Activated CD4-positive, alpha-beta T cell treated with anti-CD3 and anti-CD28 coated beads for 36 hours (primary cell): ENCODE measurements at regions of chr9 and their contacts with region 1.

Region 1: DNA sequence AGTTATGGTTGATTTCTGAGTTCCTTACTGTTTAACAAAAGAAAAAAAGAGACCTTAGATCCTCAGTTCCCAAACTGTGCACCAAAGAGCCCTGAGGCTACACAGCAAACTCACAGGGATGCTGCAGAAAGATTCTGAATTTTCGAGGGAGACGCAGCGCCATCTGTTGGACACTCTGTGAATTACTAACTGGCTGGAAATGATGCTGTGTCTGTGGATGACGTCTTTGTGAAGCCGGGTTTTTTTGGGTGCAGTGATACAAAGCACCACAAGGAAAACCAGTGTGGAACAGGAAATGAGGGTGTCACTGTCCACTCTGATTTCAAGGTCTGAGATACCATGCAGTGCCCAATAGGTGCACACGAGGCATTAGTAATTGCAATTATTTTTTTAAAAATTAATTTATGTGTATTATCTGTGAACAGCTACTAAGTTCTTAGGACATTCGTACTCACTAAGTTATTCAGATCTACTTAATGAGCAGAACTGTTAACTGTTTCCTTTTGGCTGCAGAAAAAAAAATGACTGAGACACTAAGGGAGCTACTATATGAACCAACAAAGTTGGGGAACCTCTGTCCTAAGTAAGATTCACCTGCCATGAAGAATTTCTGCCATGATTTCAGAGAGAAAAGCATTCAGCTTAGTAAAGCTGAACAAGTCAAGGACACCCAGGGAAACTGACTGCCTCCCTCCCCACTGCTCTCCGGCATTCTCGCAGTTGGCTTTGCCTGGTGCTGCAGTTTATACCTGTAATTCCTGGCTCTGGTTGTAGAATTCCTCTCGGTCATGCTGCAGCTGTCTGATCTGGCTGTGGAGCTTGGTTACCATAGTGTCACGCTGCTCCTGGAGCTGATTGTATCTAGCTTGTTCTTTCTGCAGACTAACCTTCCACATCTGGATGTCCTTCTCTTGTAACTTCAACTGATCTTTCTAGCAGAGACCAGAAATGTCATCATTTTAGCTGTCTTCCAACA is 23.4 kb downstream of the SPACA9 start:
- DNase-seq: peak; percentile 87
- ATAC-seq: peak; percentile 99
- H3K4me3 Mint-ChIP-seq: no peak overlapping the region
- H3K27ac Mint-ChIP-seq: no peak overlapping the region
- H3K4me1 Mint-ChIP-seq: peaks cover 8% of the 10 kb centered on the region
- H3K27me3 Mint-ChIP-seq: no peaks in the 10 kb centered on the region

Region 2: DNA sequence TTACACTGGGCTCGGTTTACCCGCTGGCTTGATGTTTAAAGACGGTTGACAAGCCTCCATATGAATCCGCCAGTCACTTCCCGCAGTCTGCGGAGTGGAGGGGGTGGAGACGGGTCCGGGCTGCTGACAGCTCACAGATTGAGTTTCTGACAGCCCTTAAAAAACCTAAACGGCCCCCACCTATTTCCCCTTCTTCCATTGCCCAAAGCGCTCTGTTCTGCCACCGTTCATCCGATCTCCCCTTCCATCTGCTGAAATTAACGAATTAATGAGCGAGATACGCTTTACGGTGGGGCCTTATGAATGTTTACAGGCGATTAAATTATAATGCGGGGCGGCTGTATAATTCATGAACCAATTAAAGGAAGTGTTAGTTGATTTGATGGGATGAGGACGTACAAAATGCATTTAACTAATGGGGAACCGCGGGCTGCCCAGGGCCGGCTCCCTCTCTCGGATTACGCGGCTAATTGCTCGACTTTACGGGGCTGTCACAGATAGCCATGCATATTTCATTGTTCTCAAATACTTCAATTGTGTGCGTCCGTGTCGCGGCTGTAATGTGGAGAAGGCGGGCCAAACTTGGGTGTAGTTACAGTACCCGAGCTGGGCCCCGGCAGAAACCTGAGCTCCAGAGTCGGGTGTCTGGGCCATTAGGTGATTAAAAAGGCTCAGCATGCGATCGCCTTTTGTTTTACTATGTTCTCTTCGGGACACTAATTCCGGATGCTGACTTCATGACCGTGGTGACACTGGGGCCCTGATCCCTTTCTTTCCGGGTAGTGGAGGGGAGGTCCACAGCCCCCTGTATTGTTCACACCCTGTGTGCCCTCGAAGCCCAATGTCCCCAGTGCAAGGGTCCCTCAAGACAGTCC is 157.0 kb before region 1 on chr9:
- CTCF ChIA-PET with region 1: no interaction called
- POLR2A ChIA-PET with region 1: no interaction called
- intact Hi-C with region 1: no loop called
- DNase-seq: peak; percentile 29
- ATAC-seq: no peak
- H3K4me3 Mint-ChIP-seq: no peak overlapping the region
- H3K27ac Mint-ChIP-seq: no peak overlapping the region
- H3K4me1 Mint-ChIP-seq: peaks cover 5% of the 10 kb centered on the region
- H3K27me3 Mint-ChIP-seq: peaks cover 44% of the 10 kb centered on the region

Region 3: GRCh38 chr9:132800038-132800648 is 102.0 kb before region 1 on chr9:
- CTCF ChIA-PET with region 1: interaction called, 3 read pairs
- POLR2A ChIA-PET with region 1: no interaction called
- intact Hi-C with region 1: loop called in 1 of 2 experiments (anchors 5 kb)
- DNase-seq: peak; percentile 77
- ATAC-seq: peak; percentile 87
- H3K4me3 Mint-ChIP-seq: no peak overlapping the region
- H3K27ac Mint-ChIP-seq: no peak overlapping the region
- H3K4me1 Mint-ChIP-seq: no peaks in the 10 kb centered on the region
- H3K27me3 Mint-ChIP-seq: peaks cover 9% of the 10 kb centered on the region

Region 4: GRCh38 chr9:132849185-132849706 is 52.9 kb before region 1 on chr9:
- CTCF ChIA-PET with region 1: interaction called, 29 read pairs
- POLR2A ChIA-PET with region 1: interaction called, 4 read pairs
- intact Hi-C with region 1: loop called (anchors 1 to 2 kb)
- DNase-seq: peak; percentile 36
- ATAC-seq: peak; percentile 56
- H3K4me3 Mint-ChIP-seq: peak overlapping the region; percentile 43
- H3K27ac Mint-ChIP-seq: peak overlapping the region; percentile 72
- H3K4me1 Mint-ChIP-seq: peaks cover 17% of the 10 kb centered on the region
- H3K27me3 Mint-ChIP-seq: no peaks in the 10 kb centered on the region

Region 5: DNA sequence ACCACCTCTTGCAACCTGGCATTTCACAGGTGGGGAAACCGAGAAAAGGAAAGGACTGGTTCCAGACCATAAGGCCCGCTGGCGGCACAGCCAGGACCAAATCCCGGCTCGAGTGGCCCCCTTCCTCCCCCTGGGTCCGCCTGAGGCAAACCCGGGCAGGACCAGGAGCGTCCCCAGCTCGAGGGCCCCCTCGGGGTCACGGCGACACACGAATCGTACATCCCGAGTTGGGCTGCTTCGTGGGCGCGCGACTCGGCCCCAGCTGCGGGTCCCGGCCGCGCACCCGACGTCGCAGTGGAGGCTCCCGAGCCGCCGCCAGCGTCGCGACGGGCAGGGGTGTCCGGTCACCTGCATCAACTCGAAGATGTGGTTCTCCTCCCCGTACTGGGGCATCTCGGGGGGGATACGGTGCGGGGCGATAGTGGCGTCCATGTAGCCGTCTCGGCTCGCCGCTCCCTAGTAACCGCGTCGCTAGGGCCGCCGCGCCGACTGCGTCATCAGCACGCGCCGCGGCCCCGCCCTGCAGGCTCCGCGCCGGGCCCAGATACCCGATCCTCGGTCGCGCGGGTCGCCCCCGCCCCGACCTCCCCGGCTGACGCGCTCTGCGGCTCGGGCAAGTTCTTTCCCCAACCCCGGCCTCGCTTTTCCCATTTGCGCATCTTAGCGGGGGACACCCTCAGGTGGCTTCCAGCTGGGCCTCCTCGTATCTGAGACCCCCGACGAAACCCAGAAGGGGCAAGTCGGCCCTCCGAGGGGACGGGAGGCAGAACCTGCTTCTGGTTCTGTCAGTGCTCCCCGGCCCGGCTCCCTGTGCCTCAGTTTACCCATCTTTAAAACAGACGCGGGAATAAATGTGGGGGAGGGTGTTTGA is 24.1 kb before region 1 on chr9 and contains the start of gene AK8:
- CTCF ChIA-PET with region 1: interaction called, 12 read pairs
- POLR2A ChIA-PET with region 1: no interaction called
- intact Hi-C with region 1: loop called in 1 of 2 experiments (anchors 1 kb)
- DNase-seq: peak; percentile 86
- ATAC-seq: peak; percentile 76
- H3K4me3 Mint-ChIP-seq: peak within 1 kb of the TSS; percentile 73
- H3K27ac Mint-ChIP-seq: peak within 1 kb of the TSS; percentile 13
- H3K4me1 Mint-ChIP-seq: peaks cover 21% of the 10 kb centered on the region
- H3K27me3 Mint-ChIP-seq: no peaks in the 10 kb centered on the region
- total RNA-seq, gene AK8: 0.21 TPM in 1 of 2 experiments, not detected in the other

Region 6: DNA sequence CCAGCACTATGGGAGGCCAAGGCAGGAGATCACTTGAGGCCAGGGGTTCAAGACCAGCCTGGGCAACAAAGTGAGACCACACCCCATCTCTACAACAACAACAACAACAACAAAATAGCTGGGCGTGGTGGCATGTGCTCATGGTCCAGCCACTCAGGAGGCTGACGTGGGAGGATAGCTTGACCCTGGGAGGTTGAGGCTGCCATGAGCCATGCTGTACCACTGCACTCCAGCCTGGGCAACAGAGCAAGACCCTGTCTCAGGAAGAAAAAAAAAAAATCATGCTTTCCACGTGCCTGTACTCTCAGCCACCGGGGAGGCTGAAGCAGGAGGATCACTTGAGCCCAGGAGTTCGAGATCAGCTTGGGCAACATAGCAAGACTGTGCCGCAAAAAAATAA is 12.8 kb after region 1 on chr9:
- CTCF ChIA-PET with region 1: interaction called, 10 read pairs
- POLR2A ChIA-PET with region 1: no interaction called
- intact Hi-C with region 1: no loop called
- DNase-seq: no peak
- ATAC-seq: no peak
- H3K4me3 Mint-ChIP-seq: no peak overlapping the region
- H3K27ac Mint-ChIP-seq: no peak overlapping the region
- H3K4me1 Mint-ChIP-seq: no peaks in the 10 kb centered on the region
- H3K27me3 Mint-ChIP-seq: no peaks in the 10 kb centered on the region

Region 7: DNA sequence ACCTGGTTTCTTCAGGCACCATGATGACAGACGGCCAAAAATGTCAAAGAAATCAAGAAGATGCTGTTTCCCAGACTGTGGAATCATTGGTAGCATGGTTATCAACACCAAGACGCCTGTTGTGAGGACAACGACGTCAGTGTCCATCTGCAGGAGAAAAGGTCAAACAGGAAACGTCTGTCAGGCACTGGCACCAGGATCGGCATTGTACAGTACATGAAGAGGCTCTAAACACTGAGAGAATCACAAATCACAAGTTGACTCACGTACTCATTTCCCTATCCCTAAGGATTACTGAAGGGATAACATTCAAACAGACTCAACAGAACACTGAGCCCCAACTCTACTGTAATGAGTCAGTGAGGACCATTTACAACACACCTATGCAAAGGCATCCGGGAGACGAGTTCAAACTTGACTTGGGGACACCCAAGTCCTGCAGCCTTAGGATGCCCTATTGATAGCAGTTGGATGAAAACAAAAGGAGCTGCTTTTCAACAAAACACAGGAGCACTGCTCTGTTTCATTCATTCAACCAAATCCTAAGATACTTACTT is 21.3 kb after region 1 on chr9:
- CTCF ChIA-PET with region 1: interaction called, 14 read pairs
- POLR2A ChIA-PET with region 1: no interaction called
- intact Hi-C with region 1: no loop called
- DNase-seq: no peak
- ATAC-seq: no peak
- H3K4me3 Mint-ChIP-seq: no peak overlapping the region
- H3K27ac Mint-ChIP-seq: no peak overlapping the region
- H3K4me1 Mint-ChIP-seq: no peaks in the 10 kb centered on the region
- H3K27me3 Mint-ChIP-seq: no peaks in the 10 kb centered on the region

Region 8: GRCh38 chr9:132973713-132974112 is 71.6 kb after region 1 on chr9:
- CTCF ChIA-PET with region 1: interaction called, 5 read pairs
- POLR2A ChIA-PET with region 1: no interaction called
- intact Hi-C with region 1: loop called in 1 of 2 experiments (anchors 1 kb)
- DNase-seq: peak; percentile 51
- ATAC-seq: peak; percentile 64
- H3K4me3 Mint-ChIP-seq: no peak overlapping the region
- H3K27ac Mint-ChIP-seq: no peak overlapping the region
- H3K4me1 Mint-ChIP-seq: peaks cover 4% of the 10 kb centered on the region
- H3K27me3 Mint-ChIP-seq: peaks cover 18% of the 10 kb centered on the region

Region 9: DNA sequence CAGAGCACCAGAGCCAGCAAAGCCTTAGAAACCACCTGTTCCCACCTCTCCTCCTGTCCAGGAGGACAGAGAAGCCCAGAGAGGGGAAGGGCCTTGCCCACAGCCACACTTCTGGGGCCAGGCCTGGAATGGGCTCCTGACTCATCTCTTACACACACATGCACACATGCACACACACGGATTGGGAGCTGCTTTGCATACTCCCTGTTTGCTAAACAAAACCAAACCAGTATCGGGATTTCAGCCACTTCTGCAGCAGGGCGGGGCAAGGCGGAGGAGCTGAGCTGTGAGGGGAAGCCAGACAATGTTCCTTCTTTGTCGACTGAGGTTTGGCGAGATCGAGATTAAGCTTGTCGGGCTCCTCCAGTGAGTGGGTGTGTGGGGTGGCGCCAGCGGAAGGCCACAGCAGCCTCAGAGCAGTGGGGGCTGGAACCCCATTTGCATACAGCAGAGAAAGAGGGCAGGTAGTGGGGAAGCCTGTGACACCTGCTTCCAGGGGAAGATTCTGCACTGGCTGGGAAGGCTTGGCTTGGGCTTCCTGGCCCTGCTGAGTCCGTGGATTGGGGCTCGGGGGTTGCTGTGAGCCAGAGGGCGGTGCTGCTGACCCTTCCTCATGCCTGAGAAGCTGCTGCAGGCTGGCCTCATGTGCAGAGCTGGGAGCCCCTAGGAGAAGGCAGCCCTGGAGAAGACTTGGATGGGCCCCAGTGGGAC is 92.4 kb after region 1 on chr9:
- CTCF ChIA-PET with region 1: no interaction called
- POLR2A ChIA-PET with region 1: no interaction called
- intact Hi-C with region 1: no loop called
- DNase-seq: no peak
- ATAC-seq: no peak
- H3K4me3 Mint-ChIP-seq: no peak overlapping the region
- H3K27ac Mint-ChIP-seq: no peak overlapping the region
- H3K4me1 Mint-ChIP-seq: no peaks in the 10 kb centered on the region
- H3K27me3 Mint-ChIP-seq: peaks cover 21% of the 10 kb centered on the region

Region 10: DNA sequence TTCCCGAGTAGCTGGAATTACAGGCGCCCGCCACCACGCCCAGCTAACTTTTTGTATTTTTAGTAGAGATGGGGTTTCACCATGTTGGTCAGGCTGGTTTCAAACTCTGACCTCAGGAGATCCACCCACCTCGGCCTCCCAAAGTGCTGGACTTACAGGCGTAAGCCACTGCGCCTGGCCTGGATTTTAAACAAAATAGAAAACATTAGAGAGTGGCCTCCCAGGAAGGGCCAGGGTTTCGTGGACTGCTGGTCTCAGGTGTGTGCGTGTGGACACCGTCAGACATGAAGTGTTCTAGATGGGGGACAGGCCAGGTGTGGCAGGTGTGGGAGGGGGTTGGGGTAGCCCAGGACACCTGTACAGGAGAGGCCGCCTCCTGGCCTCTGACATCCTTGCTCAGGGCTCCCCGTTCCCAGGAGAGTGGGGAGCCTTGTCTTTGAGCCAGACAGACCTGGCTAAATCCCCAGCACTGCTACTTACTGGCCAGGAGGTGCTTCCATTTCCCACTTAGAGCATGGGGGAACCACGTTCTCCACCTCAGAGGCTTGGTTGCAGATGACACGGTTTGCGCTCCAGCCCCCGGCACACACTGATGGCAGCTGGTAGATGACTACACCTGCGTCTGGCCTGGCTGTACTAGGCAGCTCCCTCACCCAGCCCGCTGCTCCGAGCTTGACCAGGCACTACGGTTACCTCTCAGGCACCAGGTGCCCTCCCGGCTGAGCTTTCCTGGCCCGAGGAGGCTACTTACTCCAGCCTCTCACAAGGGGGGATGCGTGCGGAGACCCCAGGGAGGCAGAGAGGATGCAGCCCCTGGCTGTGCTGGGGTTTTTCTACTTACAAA is 268.8 kb after region 1 on chr9:
- CTCF ChIA-PET with region 1: no interaction called
- POLR2A ChIA-PET with region 1: no interaction called
- intact Hi-C with region 1: no loop called
- DNase-seq: no peak
- ATAC-seq: no peak
- H3K4me3 Mint-ChIP-seq: no peak overlapping the region
- H3K27ac Mint-ChIP-seq: no peak overlapping the region
- H3K4me1 Mint-ChIP-seq: no peaks in the 10 kb centered on the region
- H3K27me3 Mint-ChIP-seq: no peaks in the 10 kb centered on the region